Ovary (tissue), 10 donors: ENCODE measurements at regions of chr14 and their contacts with region 1.

Region 1: GRCh38 chr14:94077823-94078222 is 3.2 kb downstream of the DDX24 start:
- DNase-seq: no peak
- H3K4me3 ChIP-seq: peak overlapping the region; percentile 99
- H3K27ac ChIP-seq: no peak overlapping the region
- H3K4me1 ChIP-seq: peaks cover 21% of the 10 kb centered on the region
- H3K27me3 ChIP-seq: no peaks in the 10 kb centered on the region
- CTCF ChIP-seq: no peak
- EP300 ChIP-seq: no peak
- POLR2A ChIP-seq: no peak

Region 2: DNA sequence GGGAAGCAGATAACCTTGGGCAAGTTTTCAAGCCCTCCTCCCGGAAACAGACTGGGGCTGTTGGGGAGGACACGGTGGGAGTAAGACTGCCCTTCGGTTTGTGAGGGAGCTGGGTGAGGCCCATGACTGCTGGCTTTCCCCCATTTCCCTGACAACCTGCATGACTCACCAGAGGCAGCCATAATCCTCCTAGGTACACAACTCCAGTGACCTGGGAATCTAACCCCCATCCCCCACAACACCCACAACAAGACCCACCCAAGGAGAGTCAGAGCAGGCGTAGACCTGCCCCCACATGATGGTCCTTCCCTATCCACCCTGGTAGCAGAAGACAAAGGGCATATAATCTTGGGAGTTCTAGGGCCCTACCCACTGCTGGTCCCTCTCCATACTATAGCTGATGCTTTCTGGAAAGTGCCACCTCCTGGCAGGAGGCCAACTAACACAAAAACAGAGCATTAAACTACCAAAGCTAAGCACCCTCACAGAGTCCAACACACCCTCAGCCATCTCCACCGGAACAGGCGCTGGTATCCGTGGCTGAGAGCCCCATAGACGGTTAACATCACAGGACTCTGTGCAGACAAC is 11.6 kb before region 1 on chr14:
- intact Hi-C with region 1: loop called in 1 of 4 experiments (anchors 1 kb)
- DNase-seq: peak in 1 of 5 donors; percentile 50
- H3K4me3 ChIP-seq: no peak overlapping the region
- H3K27ac ChIP-seq: peak overlapping the region in 1 of 2 donors; percentile 13
- H3K4me1 ChIP-seq: peaks cover 16% of the 10 kb centered on the region
- H3K27me3 ChIP-seq: no peaks in the 10 kb centered on the region
- CTCF ChIP-seq: no peak
- EP300 ChIP-seq: no peak
- POLR2A ChIP-seq: no peak